Heart right ventricle (tissue), 16 donors: ENCODE measurements at regions of chr7 and their contacts with region 1.

Region 1: DNA sequence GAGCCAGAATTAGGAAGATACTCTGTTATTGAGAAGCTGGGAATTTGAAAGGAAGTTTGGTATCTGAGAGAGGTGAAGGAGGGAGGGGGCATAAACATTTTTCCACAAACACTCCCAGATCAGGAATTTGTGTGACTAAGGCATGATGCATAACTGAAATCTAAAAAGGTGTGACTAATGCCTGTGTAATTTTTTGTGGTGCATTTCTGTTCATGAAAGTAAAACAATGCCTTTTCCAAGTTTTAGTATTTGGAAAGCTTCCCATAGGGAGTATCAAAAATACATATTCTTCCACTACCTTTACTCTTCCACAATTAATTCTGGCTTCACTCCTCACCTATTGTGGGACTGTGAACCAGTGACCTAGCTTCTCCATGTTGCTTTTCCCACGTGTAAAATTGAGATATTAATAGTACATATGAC is 56.4 kb upstream of the CAV2 start:
- DNase-seq: no peak
- ATAC-seq: peak in 3 of 8 donors; percentile 17 to 50 (median 19)
- H3K4me3 ChIP-seq: no peak overlapping the region
- H3K27ac ChIP-seq: peak overlapping the region in 7 of 10 donors; percentile 11 to 79 (median 50)
- H3K4me1 ChIP-seq: peaks cover 7 to 76% (median 36%) of the 10 kb centered on the region in 9 donors
- H3K27me3 ChIP-seq: no peaks in the 10 kb centered on the region
- CTCF ChIP-seq: no peak

Region 2: GRCh38 chr7:116258734-116259133 is 184.4 kb before region 1 on chr7:
- intact Hi-C with region 1: loop called in 1 of 10 experiments (anchors 10 kb)
- DNase-seq: peak in 1 of 2 donors; percentile 26
- ATAC-seq: peak in 6 of 8 donors; percentile 67 to 79 (median 72)
- H3K4me3 ChIP-seq: no peak overlapping the region
- H3K27ac ChIP-seq: peak overlapping the region in 6 of 10 donors; percentile 0 to 42 (median 28)
- H3K4me1 ChIP-seq: peaks cover 0 to 15% (median 5%) of the 10 kb centered on the region in 9 donors
- H3K27me3 ChIP-seq: no peaks in the 10 kb centered on the region
- CTCF ChIP-seq: peak; percentile 59 to 89 (median 85)

Region 3: DNA sequence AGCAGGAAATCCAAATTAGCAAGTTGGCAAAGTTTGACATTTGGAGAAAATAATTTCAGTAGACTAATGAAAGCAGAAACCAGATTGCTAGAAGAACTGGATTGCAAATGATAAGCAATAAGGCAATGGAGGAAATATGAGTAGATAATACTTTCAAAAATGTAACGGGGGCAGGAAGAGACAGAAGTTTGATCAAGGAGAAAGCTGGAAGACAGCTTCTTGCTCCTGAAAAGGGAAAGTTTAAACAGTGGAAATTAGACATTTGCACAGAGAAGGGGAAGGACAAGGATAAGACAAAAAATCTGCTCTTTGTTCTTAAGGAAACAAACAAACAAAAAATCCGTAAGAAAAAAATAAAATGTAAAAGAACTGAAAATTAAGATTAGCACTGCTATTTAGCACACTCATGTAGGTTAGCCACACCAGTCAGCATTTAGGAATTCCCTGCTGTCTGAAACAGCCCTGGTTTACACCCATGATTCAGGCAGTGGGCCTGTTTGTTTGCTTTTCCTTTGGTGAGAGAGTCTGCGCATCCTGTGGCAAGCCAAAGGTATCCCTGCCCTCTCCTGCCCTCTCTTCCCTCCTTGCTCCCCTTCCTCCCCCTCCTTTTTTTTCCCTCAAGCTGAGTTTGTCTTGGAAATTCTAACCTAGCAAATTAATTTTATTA is 47.9 kb before region 1 on chr7:
- intact Hi-C with region 1: loop called in 1 of 10 experiments (anchors 10 kb)
- DNase-seq: no peak
- ATAC-seq: peak in 5 of 8 donors; percentile 14 to 54 (median 48)
- H3K4me3 ChIP-seq: no peak overlapping the region
- H3K27ac ChIP-seq: peak overlapping the region in 8 of 10 donors; percentile 19 to 75 (median 51)
- H3K4me1 ChIP-seq: peaks cover 3 to 50% (median 30%) of the 10 kb centered on the region in 9 donors
- H3K27me3 ChIP-seq: no peaks in the 10 kb centered on the region
- CTCF ChIP-seq: no peak

Region 4: DNA sequence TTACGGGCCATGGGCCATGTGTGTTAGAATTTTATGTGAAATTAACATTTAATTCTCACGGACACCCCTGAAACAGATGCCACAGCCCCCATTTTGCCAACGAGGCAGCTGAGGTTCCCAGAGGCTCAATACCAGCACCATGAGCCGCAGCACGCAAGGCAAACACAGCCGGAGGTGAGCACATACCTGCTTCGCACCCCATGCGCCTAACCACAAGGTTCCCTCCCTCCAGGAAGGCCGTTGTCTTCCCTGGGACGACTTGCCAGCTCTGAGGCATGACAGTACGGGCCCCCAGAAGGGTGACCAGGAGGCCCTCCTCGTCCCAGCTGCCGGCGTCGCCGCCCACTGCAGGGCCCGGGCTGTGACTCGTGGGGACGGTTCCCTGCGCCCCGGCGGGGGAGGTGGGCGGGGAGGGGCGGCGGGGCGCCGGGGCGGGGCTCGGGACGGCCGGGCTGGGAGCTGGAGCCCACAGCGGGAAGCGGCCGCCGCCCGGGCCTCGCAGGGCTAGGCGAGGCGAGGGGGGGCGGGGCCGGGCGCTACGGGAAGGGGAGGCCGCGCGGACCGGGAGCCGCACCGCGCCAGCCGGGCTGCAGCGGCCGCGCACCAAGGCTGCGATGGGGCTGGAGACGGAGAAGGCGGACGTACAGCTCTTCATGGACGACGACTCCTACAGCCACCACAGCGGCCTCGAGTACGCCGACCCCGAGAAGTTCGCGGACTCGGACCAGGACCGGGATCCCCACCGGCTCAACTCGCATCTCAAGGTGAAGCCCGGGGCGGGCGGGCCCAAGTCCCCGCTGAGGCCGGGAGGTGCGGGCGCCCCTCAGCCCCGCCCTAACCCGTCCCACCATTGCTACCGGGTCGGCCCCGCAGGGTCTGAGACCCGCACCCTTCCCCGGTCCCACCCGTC is 56.3 kb after region 1 on chr7 and contains the start of gene CAV2:
- intact Hi-C with region 1: loop called in 7 of 10 experiments (anchors 5 to 10 kb)
- DNase-seq: peak; percentile 82 to 85
- ATAC-seq: peak; percentile 76 to 94 (median 88)
- H3K4me3 ChIP-seq: peak within 1 kb of the TSS; percentile 66 to 96 (median 84)
- H3K27ac ChIP-seq: peak within 1 kb of the TSS; percentile 92 to 100 (median 99)
- H3K4me1 ChIP-seq: peaks cover 0 to 52% (median 25%) of the 10 kb centered on the region in 9 donors
- H3K27me3 ChIP-seq: peaks cover 0 to 32% (median 0%) of the 10 kb centered on the region in 7 donors
- CTCF ChIP-seq: no peak
- total RNA-seq, gene CAV2: 196 to 277 (median 244) TPM

Region 5: GRCh38 chr7:116616555-116617059 is 173.5 kb after region 1 on chr7:
- intact Hi-C with region 1: no loop called
- DNase-seq: no peak
- ATAC-seq: no peak
- H3K4me3 ChIP-seq: no peak overlapping the region
- H3K27ac ChIP-seq: no peak overlapping the region
- H3K4me1 ChIP-seq: peaks cover 0 to 6% (median 0%) of the 10 kb centered on the region in 9 donors
- H3K27me3 ChIP-seq: peaks cover 0 to 37% (median 0%) of the 10 kb centered on the region in 7 donors
- CTCF ChIP-seq: no peak